A673 (cell line): ENCODE measurements at regions of chr4 and their contacts with region 1.

Region 1: DNA sequence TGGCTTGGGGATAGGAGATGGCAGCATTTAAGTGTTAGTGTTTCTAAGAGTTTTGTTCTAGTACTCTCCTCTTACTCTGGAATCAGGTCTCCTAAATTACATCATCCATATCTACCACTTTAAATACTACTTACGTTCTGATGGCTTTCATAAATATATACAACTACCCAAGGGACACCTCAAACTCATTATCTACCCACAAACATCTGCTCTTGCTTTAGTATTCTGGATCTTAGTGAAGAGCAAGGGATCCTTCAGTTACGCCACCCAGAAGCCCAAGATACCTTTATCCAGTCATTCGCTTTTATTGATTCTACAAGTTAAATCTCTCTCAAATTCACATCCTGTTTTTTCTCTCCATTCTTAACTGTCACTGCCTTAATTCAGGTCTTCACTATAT is 7.0 kb downstream of the NUP54 start:
- DNase-seq: no peak
- H3K4me3 ChIP-seq: no peak overlapping the region
- H3K27ac ChIP-seq: no peak overlapping the region
- H3K4me1 ChIP-seq: no peaks in the 10 kb centered on the region
- H3K27me3 ChIP-seq: no peaks in the 10 kb centered on the region
- CTCF ChIP-seq: no peak

Region 2: GRCh38 chr4:75940692-75941253 is 200.5 kb before region 1 on chr4 and contains the start of gene NAAA:
- CTCF ChIA-PET with region 1: no interaction called
- POLR2A ChIA-PET with region 1: interaction called, 10 read pairs
- intact Hi-C with region 1: no loop called
- DNase-seq: peak; percentile 41
- H3K4me3 ChIP-seq: peak within 1 kb of the TSS; percentile 59
- H3K27ac ChIP-seq: peak within 1 kb of the TSS; percentile 40
- H3K4me1 ChIP-seq: no peaks in the 10 kb centered on the region
- H3K27me3 ChIP-seq: no peaks in the 10 kb centered on the region
- CTCF ChIP-seq: no peak
- total RNA-seq, gene NAAA: 4.7 and 5.3 TPM in 2 replicates

Region 3: DNA sequence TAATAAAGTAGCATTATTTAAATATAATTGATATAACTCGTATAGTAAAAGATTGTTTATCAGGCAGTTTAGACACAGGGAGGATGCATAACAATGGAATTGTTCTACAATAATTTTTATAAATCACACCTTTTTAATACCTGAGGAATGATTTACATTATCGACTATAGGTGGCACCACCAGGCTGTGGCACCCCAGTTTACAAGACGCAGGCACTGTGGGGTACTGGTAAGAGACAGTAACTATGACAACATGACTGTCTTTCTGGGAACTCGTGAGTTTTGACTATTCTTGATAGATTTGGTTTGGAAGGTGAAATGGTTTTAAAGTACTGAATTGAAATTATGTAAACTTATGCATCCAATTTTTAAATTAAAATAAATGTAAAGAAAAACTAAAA is 138.2 kb after region 1 on chr4:
- CTCF ChIA-PET with region 1: no interaction called
- POLR2A ChIA-PET with region 1: no interaction called
- intact Hi-C with region 1: no loop called
- DNase-seq: no peak
- H3K4me3 ChIP-seq: no peak overlapping the region
- H3K27ac ChIP-seq: no peak overlapping the region
- H3K4me1 ChIP-seq: no peaks in the 10 kb centered on the region
- H3K27me3 ChIP-seq: no peaks in the 10 kb centered on the region
- CTCF ChIP-seq: no peak